IMR-90 (cell line): ENCODE measurements at regions of chr5 and their contacts with region 1.

Region 1: DNA sequence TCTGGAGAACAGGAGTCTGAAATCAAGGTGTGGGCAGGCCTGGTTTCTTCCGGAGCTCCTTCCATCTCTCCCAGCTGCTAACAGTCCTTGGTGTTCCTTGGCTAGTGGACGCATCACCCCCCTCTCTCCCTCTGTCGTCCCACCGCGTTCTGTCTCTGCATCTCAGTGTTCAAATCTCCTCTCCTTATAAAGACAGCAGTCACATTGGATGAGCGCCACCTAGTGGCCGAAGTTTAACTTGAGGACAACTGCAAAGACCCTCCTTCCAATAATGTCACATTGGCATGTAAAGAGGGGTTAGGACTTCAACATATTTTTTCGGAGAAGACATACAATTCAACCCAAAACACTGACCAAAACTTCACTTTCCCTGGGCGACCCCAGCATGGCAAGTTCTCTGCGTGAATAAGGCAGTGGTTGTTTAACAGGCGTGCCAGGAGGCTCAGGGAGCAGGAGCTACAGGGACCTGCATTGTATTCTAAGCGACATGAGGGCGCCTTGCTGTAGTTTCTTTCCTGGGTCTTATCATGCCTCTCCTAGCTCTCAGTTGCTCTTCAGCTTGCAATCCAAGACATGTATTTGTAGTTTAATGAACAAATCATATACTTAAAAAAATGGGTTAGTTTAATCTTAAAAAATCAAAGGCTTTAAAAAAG is 27.9 kb upstream of the BASP1 start:
- DNase-seq: peak; percentile 86
- ATAC-seq: peak; percentile 7; the same call in 1 of the 2 replicates
- H3K4me3 ChIP-seq: no peak overlapping the region
- H3K27ac ChIP-seq: peak overlapping the region; percentile 90
- H3K4me1 ChIP-seq: peaks cover 40% of the 10 kb centered on the region
- H3K27me3 ChIP-seq: no peaks in the 10 kb centered on the region
- CTCF ChIP-seq: peak; percentile 78
- POLR2A ChIP-seq: peak; percentile 58; the same call in 1 of the 2 replicates
- RAD21 ChIP-seq: peak; percentile 88

Region 2: DNA sequence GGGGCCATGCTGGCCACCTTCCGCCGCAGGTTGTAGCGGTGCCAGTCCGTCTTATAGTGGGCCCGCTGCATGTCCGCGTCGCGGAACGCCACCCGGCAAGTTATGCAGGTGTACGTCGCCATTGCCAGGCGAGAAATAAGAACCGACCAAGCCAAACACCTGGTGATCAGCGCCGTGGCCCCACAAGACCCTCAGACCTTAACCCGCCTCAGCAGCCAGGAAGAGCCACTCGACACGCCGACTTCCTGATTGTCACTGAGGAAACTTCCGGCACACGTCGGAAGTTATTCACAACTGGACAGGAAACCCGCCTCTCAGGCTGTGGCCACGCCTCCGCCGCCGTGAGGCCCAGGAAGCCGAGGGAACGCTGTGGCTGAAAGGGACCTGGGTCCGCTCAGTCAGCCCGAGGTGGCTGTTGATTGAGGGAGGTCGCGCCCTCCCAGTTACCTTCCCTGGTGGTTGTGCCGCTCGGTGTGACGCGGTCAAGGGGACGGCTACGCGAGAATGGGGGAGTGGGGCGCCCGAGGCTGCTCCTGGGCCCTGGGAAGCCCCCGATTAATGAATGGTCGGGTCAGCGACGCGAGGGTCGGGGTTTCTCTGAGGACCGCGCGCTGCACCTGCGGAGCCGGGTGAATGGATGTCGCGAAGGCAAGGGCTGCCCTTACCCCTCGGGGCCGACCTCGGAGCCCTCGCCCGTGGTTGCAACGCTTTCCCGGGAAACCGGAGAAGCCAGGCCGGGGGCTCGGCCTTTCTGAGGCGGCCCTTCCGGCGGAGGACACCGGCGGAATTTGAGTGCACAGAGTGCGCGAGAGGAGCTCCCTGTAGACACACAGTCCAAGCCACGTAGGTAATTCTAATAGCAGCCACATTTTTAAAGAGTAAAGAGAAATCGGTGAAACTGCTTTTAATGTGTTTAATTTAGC is 723.7 kb before region 1 on chr5 and contains the start of gene ZNF622:
- CTCF ChIA-PET with region 1: no interaction called
- POLR2A ChIA-PET with region 1: no interaction called
- dilution Hi-C with region 1: no loop called
- in situ Hi-C with region 1: no loop called
- intact Hi-C with region 1: loop called (anchors 10 kb)
- DNase-seq: peak; percentile 88
- ATAC-seq: peak; percentile 73
- H3K4me3 ChIP-seq: peak within 1 kb of the TSS; percentile 88
- H3K27ac ChIP-seq: peak within 1 kb of the TSS; percentile 87
- H3K4me1 ChIP-seq: peaks cover 19% of the 10 kb centered on the region
- H3K27me3 ChIP-seq: no peaks in the 10 kb centered on the region
- CTCF ChIP-seq: no peak
- POLR2A ChIP-seq: peak; percentile 89
- RAD21 ChIP-seq: no peak
- total RNA-seq, gene ZNF622: 49.3 and 66.4 TPM in 2 replicates

Region 3: GRCh38 chr5:16690243-16690852 is 499.2 kb before region 1 on chr5:
- CTCF ChIA-PET with region 1: no interaction called
- POLR2A ChIA-PET with region 1: no interaction called
- dilution Hi-C with region 1: no loop called
- in situ Hi-C with region 1: no loop called
- intact Hi-C with region 1: loop called (anchors 2 kb)
- DNase-seq: peak; percentile 51
- ATAC-seq: peak; percentile 89
- H3K4me3 ChIP-seq: no peak overlapping the region
- H3K27ac ChIP-seq: no peak overlapping the region
- H3K4me1 ChIP-seq: no peaks in the 10 kb centered on the region
- H3K27me3 ChIP-seq: no peaks in the 10 kb centered on the region
- CTCF ChIP-seq: peak; percentile 59
- POLR2A ChIP-seq: no peak
- RAD21 ChIP-seq: peak; percentile 53

Region 4: DNA sequence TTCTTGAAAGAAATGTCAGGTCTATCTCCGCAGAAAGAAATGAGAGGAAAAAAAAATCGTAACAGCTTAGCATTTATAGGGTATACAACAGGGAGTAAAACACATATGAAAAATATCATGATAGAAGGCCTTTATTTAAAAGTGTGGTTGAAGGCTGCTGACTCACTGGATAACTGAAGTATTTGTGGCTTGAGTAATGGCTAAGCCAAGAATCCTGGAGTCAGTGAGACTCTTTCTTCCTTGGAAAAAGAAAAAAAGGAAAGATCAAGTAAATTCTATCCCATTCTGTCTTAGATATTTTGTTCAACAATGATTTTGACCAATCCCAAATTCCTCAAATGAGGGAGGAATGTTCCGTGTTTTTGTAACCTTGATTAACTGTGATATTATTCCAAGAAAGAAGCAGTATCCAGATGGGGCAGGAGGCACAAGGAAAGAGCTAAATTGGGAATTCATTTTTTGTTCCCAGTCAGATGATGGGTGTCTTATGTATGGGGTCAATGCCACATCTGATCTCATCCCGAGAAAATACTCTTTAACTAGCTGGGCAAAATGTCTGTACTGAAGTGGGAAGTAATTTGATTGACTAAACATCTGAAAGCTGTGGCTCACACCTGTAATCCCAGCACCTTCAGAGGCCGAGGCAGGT is 189.1 kb before region 1 on chr5:
- CTCF ChIA-PET with region 1: no interaction called
- POLR2A ChIA-PET with region 1: no interaction called
- dilution Hi-C with region 1: no loop called
- in situ Hi-C with region 1: loop called (anchors 10 kb)
- intact Hi-C with region 1: loop called (anchors 5 kb)
- DNase-seq: peak; percentile 98
- ATAC-seq: peak; percentile 94
- H3K4me3 ChIP-seq: no peak overlapping the region
- H3K27ac ChIP-seq: peak overlapping the region; percentile 95
- H3K4me1 ChIP-seq: peaks cover 12% of the 10 kb centered on the region
- H3K27me3 ChIP-seq: no peaks in the 10 kb centered on the region
- CTCF ChIP-seq: no peak
- POLR2A ChIP-seq: no peak
- RAD21 ChIP-seq: peak; percentile 12; the same call in 1 of the 2 replicates

Region 5: GRCh38 chr5:17132444-17133083 is 56.9 kb before region 1 on chr5:
- CTCF ChIA-PET with region 1: interaction called, 7 read pairs
- POLR2A ChIA-PET with region 1: no interaction called
- dilution Hi-C with region 1: no loop called
- in situ Hi-C with region 1: loop called (anchors 5 kb)
- intact Hi-C with region 1: loop called (anchors 2 kb)
- DNase-seq: peak; percentile 63
- ATAC-seq: peak; percentile 50
- H3K4me3 ChIP-seq: no peak overlapping the region
- H3K27ac ChIP-seq: no peak overlapping the region
- H3K4me1 ChIP-seq: peaks cover 12% of the 10 kb centered on the region
- H3K27me3 ChIP-seq: no peaks in the 10 kb centered on the region
- CTCF ChIP-seq: peak; percentile 64
- POLR2A ChIP-seq: no peak
- RAD21 ChIP-seq: peak; percentile 69

Region 6: DNA sequence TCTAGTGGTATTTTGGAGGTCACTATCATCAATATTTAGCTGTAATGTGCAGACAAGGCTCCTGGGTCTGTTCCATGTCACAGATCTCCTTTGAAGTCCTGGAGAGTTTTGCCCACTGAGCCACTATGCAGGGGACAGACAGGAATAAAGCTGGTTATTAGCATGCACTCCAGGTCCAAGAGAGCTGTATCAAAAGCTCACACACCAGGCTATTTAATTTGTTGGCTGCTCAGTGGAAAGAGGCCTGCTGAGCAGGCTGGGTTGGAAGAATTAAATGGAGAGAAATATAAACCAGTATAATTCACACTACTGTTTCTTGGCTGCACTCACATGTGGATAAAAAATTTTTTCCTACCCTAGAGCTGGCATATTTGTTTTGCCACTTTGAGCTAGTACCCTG is 194.7 kb after region 1 on chr5:
- CTCF ChIA-PET with region 1: no interaction called
- POLR2A ChIA-PET with region 1: no interaction called
- dilution Hi-C with region 1: no loop called
- in situ Hi-C with region 1: no loop called
- intact Hi-C with region 1: no loop called
- DNase-seq: no peak
- ATAC-seq: no peak
- H3K4me3 ChIP-seq: no peak overlapping the region
- H3K27ac ChIP-seq: no peak overlapping the region
- H3K4me1 ChIP-seq: peaks cover 13% of the 10 kb centered on the region
- H3K27me3 ChIP-seq: no peaks in the 10 kb centered on the region
- CTCF ChIP-seq: no peak
- POLR2A ChIP-seq: no peak
- RAD21 ChIP-seq: no peak